AG04450 (cell line): ENCODE measurements at regions of chr4 and their contacts with region 1.

Region 1: GRCh38 chr4:186851291-186852072 is 127.8 kb upstream of the FAT1 start:
- DNase-seq: no peak
- H3K4me3 ChIP-seq: no peak overlapping the region
- H3K27ac ChIP-seq: no peak overlapping the region
- H3K27me3 ChIP-seq: no peaks in the 10 kb centered on the region
- CTCF ChIP-seq: no peak

Region 2: GRCh38 chr4:186592966-186593586 is 258.4 kb before region 1 on chr4:
- CTCF ChIA-PET with region 1: no interaction called
- POLR2A ChIA-PET with region 1: no interaction called
- DNase-seq: no peak
- H3K4me3 ChIP-seq: no peak overlapping the region
- H3K27ac ChIP-seq: no peak overlapping the region
- H3K27me3 ChIP-seq: no peaks in the 10 kb centered on the region
- CTCF ChIP-seq: no peak

Region 3: DNA sequence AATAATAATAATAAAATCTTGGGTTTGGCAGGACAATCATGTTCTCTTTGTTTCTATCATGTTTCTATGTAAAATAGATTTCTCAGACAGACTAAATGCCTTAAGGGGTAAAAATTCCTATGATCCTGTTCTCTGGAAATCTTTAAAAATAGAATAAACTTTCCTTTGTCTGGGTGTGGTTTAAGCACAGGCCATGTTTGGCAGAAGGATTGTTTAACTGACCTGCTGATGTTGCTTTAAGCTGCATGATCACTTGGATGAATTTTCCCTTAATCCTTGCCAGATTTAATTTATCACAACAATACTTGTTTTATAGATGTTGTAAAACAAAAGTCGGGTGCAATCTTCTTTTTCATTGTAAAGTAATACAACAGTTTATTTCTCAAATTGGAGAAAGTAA is 213.9 kb after region 1 on chr4:
- CTCF ChIA-PET with region 1: interaction called, 15 read pairs
- POLR2A ChIA-PET with region 1: no interaction called
- DNase-seq: no peak
- H3K4me3 ChIP-seq: no peak overlapping the region
- H3K27ac ChIP-seq: no peak overlapping the region
- H3K27me3 ChIP-seq: peaks cover 2% of the 10 kb centered on the region
- CTCF ChIP-seq: no peak

Region 4: GRCh38 chr4:187090401-187090800 is 238.9 kb after region 1 on chr4:
- CTCF ChIA-PET with region 1: no interaction called
- POLR2A ChIA-PET with region 1: no interaction called
- DNase-seq: peak; percentile 18
- H3K4me3 ChIP-seq: no peak overlapping the region
- H3K27ac ChIP-seq: no peak overlapping the region
- H3K27me3 ChIP-seq: no peaks in the 10 kb centered on the region
- CTCF ChIP-seq: no peak